AG04449 (cell line): ENCODE measurements at regions of chr12 and their contacts with region 1.

Region 1: DNA sequence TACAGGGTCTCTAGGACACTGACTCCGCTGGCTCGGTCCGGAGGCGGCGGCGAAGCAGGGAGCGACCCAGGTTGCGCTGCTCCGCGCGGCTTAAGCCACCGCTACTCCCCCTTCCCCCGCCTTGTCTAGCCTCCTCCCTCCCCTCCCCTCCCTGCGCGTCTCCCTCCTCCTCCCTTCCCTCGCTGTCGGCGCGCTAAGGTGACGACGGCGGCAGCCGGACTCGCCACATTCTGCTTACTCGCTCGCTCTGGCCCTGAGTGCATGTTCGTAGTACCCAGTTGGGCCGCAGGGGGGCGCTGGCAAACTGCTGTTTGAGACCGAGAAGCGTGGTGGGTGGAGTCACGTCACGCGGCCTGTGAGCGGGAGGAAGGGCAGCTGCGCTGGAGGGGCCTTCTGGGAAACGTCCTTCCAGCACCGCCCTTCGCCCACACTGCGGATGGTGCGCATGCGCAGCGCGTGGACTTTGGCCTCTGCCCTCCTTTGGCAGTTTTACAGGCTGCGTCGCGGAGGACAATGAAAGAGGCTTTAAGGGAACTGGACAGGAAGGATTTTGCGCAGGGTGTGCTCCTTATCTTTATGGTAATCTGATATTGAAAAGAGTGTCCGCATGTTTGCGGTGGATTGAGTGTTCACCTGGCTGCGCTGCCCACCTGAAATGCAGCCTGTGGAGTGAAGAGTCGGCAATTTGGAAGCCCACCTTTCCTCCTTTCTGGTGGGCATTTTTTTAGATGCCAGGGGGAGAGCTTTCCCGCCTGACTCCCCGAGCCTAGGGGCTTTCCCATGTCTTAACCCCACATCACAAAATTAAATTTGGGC is at the start of gene SCAF11:
- DNase-seq: peak; percentile 98
- H3K4me3 ChIP-seq: peak within 1 kb of the TSS; percentile 90
- CTCF ChIP-seq: peak; percentile 98

Region 2: GRCh38 chr12:45914090-45914489 is 76.6 kb before region 1 on chr12:
- CTCF ChIA-PET with region 1: interaction called, 6 read pairs
- POLR2A ChIA-PET with region 1: interaction called, 12 read pairs
- DNase-seq: peak; percentile 68
- H3K4me3 ChIP-seq: no peak overlapping the region
- CTCF ChIP-seq: no peak

Region 3: DNA sequence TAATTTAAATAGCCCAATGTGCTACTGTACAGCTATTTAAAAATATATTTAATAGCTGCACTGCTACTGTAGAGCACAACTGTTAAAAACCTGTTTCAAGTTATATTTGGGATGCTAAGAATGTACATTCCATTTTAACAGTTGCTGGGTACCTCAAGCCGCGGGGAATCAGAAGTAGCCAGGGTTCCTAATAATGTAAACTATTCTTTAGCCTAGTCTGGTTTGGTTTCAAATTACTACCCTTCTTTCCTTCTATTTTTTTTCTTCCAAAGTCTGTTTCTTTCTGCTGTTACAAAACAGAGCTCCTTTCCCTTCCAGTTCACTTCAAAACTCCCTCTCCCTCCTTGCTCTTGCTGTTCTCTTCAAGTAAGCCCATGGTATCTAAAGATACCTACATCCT is 21.6 kb before region 1 on chr12:
- CTCF ChIA-PET with region 1: interaction called, 11 read pairs
- POLR2A ChIA-PET with region 1: interaction called, 4 read pairs
- DNase-seq: no peak
- H3K4me3 ChIP-seq: no peak overlapping the region
- CTCF ChIP-seq: no peak

Region 4: DNA sequence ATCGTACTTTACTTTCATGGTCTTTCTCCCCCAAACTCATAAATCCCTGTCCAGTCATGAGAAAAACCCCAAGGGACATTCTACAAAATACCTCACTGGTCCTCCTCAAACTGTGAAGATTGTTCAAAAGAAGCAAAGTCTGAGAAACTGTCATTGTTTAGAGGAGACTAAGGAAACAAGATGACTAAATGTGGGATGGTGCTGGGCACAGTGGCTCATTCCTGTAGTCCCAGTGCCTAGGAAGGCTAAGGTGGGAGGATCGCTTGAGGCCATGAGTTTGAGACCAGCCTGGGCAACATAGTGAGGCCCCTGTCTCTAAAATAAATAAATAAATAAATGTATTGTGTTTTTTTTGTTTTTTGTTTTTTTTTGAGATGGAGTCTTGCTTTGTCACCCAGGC is 73.9 kb after region 1 on chr12:
- CTCF ChIA-PET with region 1: no interaction called
- POLR2A ChIA-PET with region 1: no interaction called
- DNase-seq: no peak
- H3K4me3 ChIP-seq: no peak overlapping the region
- CTCF ChIP-seq: no peak